Caco-2 (cell line): ENCODE measurements at regions of chr10 and their contacts with region 1.

Region 1: GRCh38 chr10:8365935-8366911 is 311.7 kb downstream of the GATA3 start:
- DNase-seq: peak; percentile 97 to 99
- H3K4me3 ChIP-seq: peak overlapping the region; percentile 32
- H3K4me3 Mint-ChIP-seq: peak overlapping the region; percentile 79
- H3K27ac Mint-ChIP-seq: peak overlapping the region; percentile 99
- H3K4me1 ChIP-seq: peaks cover 29% of the 10 kb centered on the region
- H3K4me1 Mint-ChIP-seq: peaks cover 28% of the 10 kb centered on the region
- H3K27me3 ChIP-seq: no peaks in the 10 kb centered on the region
- H3K27me3 Mint-ChIP-seq: no peaks in the 10 kb centered on the region
- CTCF ChIP-seq: peak; percentile 5 to 32

Region 2: GRCh38 chr10:7857262-7857661 is 509.0 kb before region 1 on chr10:
- CTCF ChIA-PET with region 1: no interaction called
- POLR2A ChIA-PET with region 1: no interaction called
- intact Hi-C with region 1: loop called (anchors 5 kb)
- DNase-seq: peak in 1 of 2 experiments; percentile 24
- H3K4me3 ChIP-seq: no peak overlapping the region
- H3K4me3 Mint-ChIP-seq: peak overlapping the region; percentile 60
- H3K27ac Mint-ChIP-seq: peak overlapping the region; percentile 81
- H3K4me1 ChIP-seq: peaks cover 62% of the 10 kb centered on the region
- H3K4me1 Mint-ChIP-seq: peaks cover 49% of the 10 kb centered on the region
- H3K27me3 ChIP-seq: no peaks in the 10 kb centered on the region
- H3K27me3 Mint-ChIP-seq: no peaks in the 10 kb centered on the region
- CTCF ChIP-seq: no peak

Region 3: DNA sequence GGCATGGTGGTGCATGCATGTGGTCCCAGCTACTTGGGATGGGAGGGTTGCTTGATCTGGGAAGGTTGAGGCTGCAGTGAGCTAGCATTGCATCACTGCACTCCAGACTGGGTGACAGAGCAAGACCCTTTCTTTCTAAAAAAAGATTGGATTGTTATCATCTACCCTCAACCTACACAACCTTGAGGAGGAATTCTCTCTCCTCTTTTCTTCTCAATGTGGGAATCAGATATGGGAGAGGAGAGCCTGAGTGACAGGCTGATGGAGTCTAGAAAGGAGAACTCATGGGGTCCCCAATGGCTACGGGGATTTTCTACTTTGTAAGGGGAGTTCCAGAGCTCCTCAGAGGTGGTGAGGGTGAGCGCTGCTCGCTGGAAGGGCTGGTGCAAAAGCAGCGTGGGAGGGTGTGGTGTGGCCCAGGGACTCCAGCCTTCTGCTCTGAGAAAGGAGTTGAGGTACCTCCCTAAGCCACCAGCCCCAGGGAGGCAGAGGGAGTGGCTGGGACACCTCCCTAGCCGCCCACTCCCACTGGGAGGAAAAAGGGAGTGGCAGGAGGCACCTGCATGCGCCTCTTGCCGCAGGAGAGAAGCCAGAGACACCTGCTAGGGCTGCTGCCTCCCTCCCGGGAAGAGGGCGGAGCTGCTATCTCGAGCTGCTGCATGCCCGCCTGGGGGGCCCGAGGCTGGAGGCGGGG is 263.4 kb before region 1 on chr10:
- CTCF ChIA-PET with region 1: no interaction called
- POLR2A ChIA-PET with region 1: no interaction called
- intact Hi-C with region 1: loop called (anchors 5 kb)
- DNase-seq: peak; percentile 91 to 93
- H3K4me3 ChIP-seq: peak overlapping the region; percentile 21
- H3K4me3 Mint-ChIP-seq: peak overlapping the region; percentile 75
- H3K27ac Mint-ChIP-seq: peak overlapping the region; percentile 90
- H3K4me1 ChIP-seq: peaks cover 49% of the 10 kb centered on the region
- H3K4me1 Mint-ChIP-seq: peaks cover 38% of the 10 kb centered on the region
- H3K27me3 ChIP-seq: no peaks in the 10 kb centered on the region
- H3K27me3 Mint-ChIP-seq: no peaks in the 10 kb centered on the region
- CTCF ChIP-seq: no peak

Region 4: DNA sequence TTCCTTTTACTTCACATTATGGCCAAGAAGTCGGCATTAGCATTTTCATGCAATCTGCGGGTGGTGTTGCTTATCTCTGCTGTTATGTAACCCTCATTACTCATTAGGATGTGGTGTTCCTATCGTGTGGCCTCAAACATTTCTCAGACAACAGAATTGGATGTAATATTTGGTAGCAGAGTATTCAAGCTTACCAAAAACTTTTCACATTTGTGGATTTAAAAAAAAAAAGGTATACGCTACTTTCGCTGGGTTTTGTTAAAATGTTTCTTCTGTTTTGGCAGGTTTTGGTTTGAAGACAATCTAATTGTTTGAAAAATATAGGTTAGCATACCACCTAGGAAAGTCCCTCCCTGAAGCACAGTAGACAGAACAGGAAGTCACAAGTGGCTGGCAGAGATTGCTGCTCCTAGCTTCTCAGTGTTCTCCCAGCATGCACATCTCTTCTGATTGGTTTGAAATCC is 182.9 kb before region 1 on chr10:
- CTCF ChIA-PET with region 1: no interaction called
- POLR2A ChIA-PET with region 1: no interaction called
- intact Hi-C with region 1: no loop called
- DNase-seq: no peak
- H3K4me3 ChIP-seq: no peak overlapping the region
- H3K4me3 Mint-ChIP-seq: no peak overlapping the region
- H3K27ac Mint-ChIP-seq: no peak overlapping the region
- H3K4me1 ChIP-seq: no peaks in the 10 kb centered on the region
- H3K4me1 Mint-ChIP-seq: peaks cover 6% of the 10 kb centered on the region
- H3K27me3 ChIP-seq: no peaks in the 10 kb centered on the region
- H3K27me3 Mint-ChIP-seq: no peaks in the 10 kb centered on the region
- CTCF ChIP-seq: no peak

Region 5: GRCh38 chr10:8350351-8350967 is 15.8 kb before region 1 on chr10:
- CTCF ChIA-PET with region 1: no interaction called
- POLR2A ChIA-PET with region 1: interaction called, 6 read pairs
- intact Hi-C with region 1: loop called (anchors 1 kb)
- DNase-seq: peak in 1 of 2 experiments; percentile 61
- H3K4me3 ChIP-seq: no peak overlapping the region
- H3K4me3 Mint-ChIP-seq: peak overlapping the region; percentile 44
- H3K27ac Mint-ChIP-seq: peak overlapping the region; percentile 60
- H3K4me1 ChIP-seq: peaks cover 55% of the 10 kb centered on the region
- H3K4me1 Mint-ChIP-seq: peaks cover 43% of the 10 kb centered on the region
- H3K27me3 ChIP-seq: no peaks in the 10 kb centered on the region
- H3K27me3 Mint-ChIP-seq: no peaks in the 10 kb centered on the region
- CTCF ChIP-seq: no peak

Region 6: GRCh38 chr10:8416192-8416701 is 50.0 kb after region 1 on chr10:
- CTCF ChIA-PET with region 1: no interaction called
- POLR2A ChIA-PET with region 1: no interaction called
- intact Hi-C with region 1: loop called (anchors 2 kb)
- DNase-seq: peak in 1 of 2 experiments; percentile 27
- H3K4me3 ChIP-seq: no peak overlapping the region
- H3K4me3 Mint-ChIP-seq: no peak overlapping the region
- H3K27ac Mint-ChIP-seq: peak overlapping the region; percentile 57
- H3K4me1 ChIP-seq: peaks cover 48% of the 10 kb centered on the region
- H3K4me1 Mint-ChIP-seq: peaks cover 58% of the 10 kb centered on the region
- H3K27me3 ChIP-seq: no peaks in the 10 kb centered on the region
- H3K27me3 Mint-ChIP-seq: no peaks in the 10 kb centered on the region
- CTCF ChIP-seq: no peak

Region 7: DNA sequence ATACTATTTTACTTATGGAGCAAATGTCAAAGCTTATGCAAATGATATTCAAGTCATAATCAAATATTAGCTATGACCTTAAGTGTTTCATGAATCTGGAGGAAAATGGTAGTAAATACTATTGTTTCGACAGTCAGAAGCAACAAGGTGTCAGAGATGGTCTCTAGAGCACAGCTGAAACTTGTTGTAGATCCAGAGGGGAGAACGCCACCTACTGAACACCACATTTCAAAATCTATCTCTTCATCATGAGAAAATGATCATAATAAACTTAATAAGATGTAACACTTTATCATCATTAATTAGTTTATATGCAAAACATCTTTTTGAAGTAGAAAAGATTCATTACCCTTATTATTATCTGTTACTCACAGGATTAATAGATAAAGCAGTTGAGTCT is 107.0 kb after region 1 on chr10:
- CTCF ChIA-PET with region 1: no interaction called
- POLR2A ChIA-PET with region 1: no interaction called
- intact Hi-C with region 1: loop called (anchors 5 kb)
- DNase-seq: peak in 1 of 2 experiments; percentile 30
- H3K4me3 ChIP-seq: no peak overlapping the region
- H3K4me3 Mint-ChIP-seq: no peak overlapping the region
- H3K27ac Mint-ChIP-seq: no peak overlapping the region
- H3K4me1 ChIP-seq: no peaks in the 10 kb centered on the region
- H3K4me1 Mint-ChIP-seq: no peaks in the 10 kb centered on the region
- H3K27me3 ChIP-seq: no peaks in the 10 kb centered on the region
- H3K27me3 Mint-ChIP-seq: no peaks in the 10 kb centered on the region
- CTCF ChIP-seq: peak in 1 of 2 experiments; percentile 53